ENCODE measurements at regions of chr12 and their contacts with region 1.

Region 1: DNA sequence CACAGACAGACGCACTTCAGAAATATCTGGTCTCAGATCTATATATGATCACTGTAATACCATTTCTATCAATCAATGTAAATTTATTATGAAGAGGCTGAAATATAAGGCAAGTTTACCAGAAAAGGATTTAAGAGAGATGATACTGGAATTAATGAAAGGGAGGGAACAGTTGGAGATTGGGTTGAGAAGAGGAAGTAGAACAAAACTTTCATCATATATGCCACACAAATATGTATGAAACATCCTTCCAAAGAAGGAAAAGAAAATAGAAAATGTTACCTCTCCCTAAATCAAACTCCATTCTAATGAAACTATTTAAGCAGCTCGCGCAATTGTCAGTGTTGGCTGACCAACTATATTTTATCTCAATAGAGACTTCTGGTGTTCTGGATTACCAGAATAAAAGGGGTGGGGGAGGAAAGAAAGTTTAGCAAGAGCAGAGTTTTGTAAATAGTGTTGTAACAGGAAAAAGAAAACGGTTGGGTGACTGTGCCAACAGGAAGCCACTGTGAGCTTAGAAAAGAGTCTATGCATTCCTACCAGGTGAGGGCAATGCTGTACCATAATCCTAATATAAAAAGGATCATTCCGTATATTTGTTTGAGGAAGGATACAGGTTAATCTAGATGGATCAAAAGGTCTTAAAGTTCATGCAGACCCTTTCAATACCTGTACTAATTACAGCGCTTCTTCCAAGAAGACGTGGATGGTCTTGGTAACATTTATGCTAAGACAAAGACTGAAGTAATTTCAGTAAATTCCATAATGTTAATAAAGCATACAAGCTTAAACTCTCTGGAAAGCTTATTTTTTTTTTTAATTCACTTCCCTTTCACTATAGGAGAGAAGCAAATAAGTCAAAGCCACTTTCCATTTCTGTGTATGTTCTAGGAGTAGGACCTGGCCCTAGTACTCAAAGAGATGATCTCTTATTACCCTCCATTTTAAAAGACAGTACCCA is 14.5 kb upstream of the LLPH start:
- DNase-seq: peak in 3 of 14 experiments; percentile 11 to 52 (median 52)
- ATAC-seq: peak; percentile 73
- H3K4me3 ChIP-seq: no peak overlapping the region
- H3K4me3 Mint-ChIP-seq: no peak overlapping the region
- H3K27ac ChIP-seq: no peak overlapping the region
- H3K27ac Mint-ChIP-seq: peak overlapping the region; percentile 50
- H3K4me1 ChIP-seq: no peaks in the 10 kb centered on the region
- H3K4me1 Mint-ChIP-seq: peaks cover 34% of the 10 kb centered on the region
- H3K27me3 ChIP-seq: no peaks in the 10 kb centered on the region
- H3K27me3 Mint-ChIP-seq: no peaks in the 10 kb centered on the region
- CTCF ChIP-seq: peak; percentile 36

Region 2: DNA sequence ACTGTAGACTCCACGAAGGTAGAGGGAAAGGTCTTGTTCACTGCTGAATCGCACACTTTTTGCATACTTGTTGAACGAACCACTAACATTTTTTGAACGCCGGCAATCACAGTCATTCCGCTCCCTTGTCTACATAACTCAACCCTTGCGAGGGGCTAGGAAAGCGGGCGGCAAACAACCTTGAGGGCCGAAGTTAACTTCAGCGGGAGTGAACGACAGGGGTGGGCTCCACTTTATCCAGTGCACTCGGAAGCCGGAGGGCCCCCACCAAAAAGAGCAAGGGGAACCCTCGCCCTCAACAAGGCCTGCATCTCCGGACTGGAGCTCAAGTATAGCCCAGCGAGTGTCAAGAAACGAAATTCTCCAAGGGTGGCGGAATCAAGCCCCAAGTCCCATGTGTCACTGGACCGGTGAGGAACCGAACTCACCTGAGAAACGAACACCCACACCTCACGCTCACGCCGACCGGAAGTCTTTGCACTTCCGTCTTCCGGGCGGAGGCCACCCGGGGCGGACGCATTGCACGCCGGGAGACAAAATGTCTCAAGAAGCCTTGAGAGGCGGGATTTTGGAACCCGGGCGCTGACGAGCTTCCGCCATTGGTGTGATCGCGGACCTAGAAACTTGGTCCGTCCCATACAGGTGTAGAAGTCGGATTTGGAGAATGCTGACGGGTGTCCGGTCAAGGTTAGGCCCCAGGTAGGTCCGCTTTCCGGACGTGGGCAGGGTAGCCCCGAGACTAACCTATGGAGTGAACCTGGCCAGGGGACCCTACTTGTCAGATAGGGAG is 14.6 kb before region 1 on chr12 and contains the start of gene LLPH:
- CTCF ChIA-PET with region 1: interaction called, 8 read pairs
- POLR2A ChIA-PET with region 1: interaction called, 16 read pairs
- intact Hi-C with region 1: no loop called
- DNase-seq: peak; percentile 78 to 94 (median 84)
- ATAC-seq: peak; percentile 90
- H3K4me3 ChIP-seq: peak within 1 kb of the TSS; percentile 96
- H3K4me3 Mint-ChIP-seq: peak within 1 kb of the TSS; percentile 95
- H3K27ac ChIP-seq: peak within 1 kb of the TSS; percentile 77 to 89
- H3K27ac Mint-ChIP-seq: peak within 1 kb of the TSS; percentile 96
- H3K4me1 ChIP-seq: peaks cover 13% of the 10 kb centered on the region
- H3K4me1 Mint-ChIP-seq: peaks cover 71% of the 10 kb centered on the region
- H3K27me3 ChIP-seq: no peaks in the 10 kb centered on the region
- H3K27me3 Mint-ChIP-seq: no peaks in the 10 kb centered on the region
- CTCF ChIP-seq: no peak
- total RNA-seq, gene LLPH: 27.3 to 31.0 TPM

Region 3: GRCh38 chr12:66417217-66417616 is 272.1 kb after region 1 on chr12:
- CTCF ChIA-PET with region 1: no interaction called
- POLR2A ChIA-PET with region 1: no interaction called
- intact Hi-C with region 1: no loop called
- DNase-seq: no peak
- ATAC-seq: no peak
- H3K4me3 ChIP-seq: no peak overlapping the region
- H3K4me3 Mint-ChIP-seq: no peak overlapping the region
- H3K27ac ChIP-seq: no peak overlapping the region
- H3K27ac Mint-ChIP-seq: no peak overlapping the region
- H3K4me1 ChIP-seq: no peaks in the 10 kb centered on the region
- H3K4me1 Mint-ChIP-seq: no peaks in the 10 kb centered on the region
- H3K27me3 ChIP-seq: no peaks in the 10 kb centered on the region
- H3K27me3 Mint-ChIP-seq: peaks cover 10% of the 10 kb centered on the region
- CTCF ChIP-seq: no peak

Region 4: GRCh38 chr12:66708704-66709456 is 563.8 kb after region 1 on chr12:
- CTCF ChIA-PET with region 1: no interaction called
- POLR2A ChIA-PET with region 1: no interaction called
- intact Hi-C with region 1: loop called in 1 of 2 experiments (anchors 2 kb)
- DNase-seq: peak in 3 of 14 experiments; percentile 36 to 46 (median 38)
- ATAC-seq: peak; percentile 85
- H3K4me3 ChIP-seq: no peak overlapping the region
- H3K4me3 Mint-ChIP-seq: peak overlapping the region; percentile 70
- H3K27ac ChIP-seq: no peak overlapping the region
- H3K27ac Mint-ChIP-seq: peak overlapping the region; percentile 73
- H3K4me1 ChIP-seq: peaks cover 3% of the 10 kb centered on the region
- H3K4me1 Mint-ChIP-seq: peaks cover 48% of the 10 kb centered on the region
- H3K27me3 ChIP-seq: no peaks in the 10 kb centered on the region
- H3K27me3 Mint-ChIP-seq: peaks cover 5% of the 10 kb centered on the region
- CTCF ChIP-seq: peak; percentile 80

Region 5: DNA sequence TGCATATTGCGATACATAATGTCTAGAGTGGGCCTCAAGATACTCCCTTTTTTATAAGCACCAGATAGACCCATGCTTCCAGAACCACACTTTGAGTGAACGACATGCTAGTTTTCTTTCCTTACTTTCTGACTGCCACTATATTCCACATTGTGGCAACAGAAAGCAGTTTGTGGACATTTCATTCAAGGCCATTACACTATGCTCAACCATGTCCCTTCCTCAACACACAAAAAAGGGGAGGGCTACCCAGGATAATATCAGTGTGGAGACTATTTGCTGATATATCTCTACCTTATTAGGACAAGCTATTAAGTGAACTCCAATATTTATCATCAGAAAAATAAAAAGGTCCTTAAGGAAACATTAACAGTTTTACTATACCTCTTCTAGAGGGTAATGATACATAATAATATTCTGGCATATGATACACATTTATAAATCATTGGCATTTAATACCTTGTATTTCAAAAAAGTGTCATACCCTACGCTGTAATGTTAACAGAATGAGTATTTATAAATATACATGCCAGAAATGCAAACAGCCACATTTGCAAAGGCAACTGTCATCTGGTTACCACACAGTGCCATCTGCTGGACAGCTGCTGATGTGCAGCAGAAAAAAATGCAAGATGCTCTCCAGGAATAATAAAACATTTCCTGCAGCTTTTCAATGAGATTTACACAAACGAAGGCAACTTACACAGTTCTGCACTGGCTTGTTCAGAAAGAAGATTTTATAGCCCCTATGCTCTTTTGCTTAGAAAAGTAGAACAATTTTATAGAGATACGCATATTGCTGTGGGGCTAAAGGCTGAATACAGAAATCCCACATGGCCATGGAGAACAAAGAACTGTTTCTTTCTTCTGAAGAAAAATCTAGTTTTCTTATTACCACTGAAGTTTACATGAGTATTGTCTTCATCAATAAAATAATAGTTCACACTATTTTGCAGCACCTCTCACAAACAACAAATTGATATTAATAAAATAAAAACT is 716.0 kb after region 1 on chr12:
- CTCF ChIA-PET with region 1: no interaction called
- POLR2A ChIA-PET with region 1: no interaction called
- intact Hi-C with region 1: loop called in 1 of 2 experiments (anchors 2 kb)
- DNase-seq: peak; percentile 39 to 78 (median 58)
- ATAC-seq: peak; percentile 62
- H3K4me3 ChIP-seq: no peak overlapping the region
- H3K4me3 Mint-ChIP-seq: no peak overlapping the region
- H3K27ac ChIP-seq: no peak overlapping the region
- H3K27ac Mint-ChIP-seq: no peak overlapping the region
- H3K4me1 ChIP-seq: no peaks in the 10 kb centered on the region
- H3K4me1 Mint-ChIP-seq: peaks cover 23% of the 10 kb centered on the region
- H3K27me3 ChIP-seq: peaks cover 0 to 1% of the 10 kb centered on the region in 2 experiments
- H3K27me3 Mint-ChIP-seq: no peaks in the 10 kb centered on the region
- CTCF ChIP-seq: peak; percentile 95